ENCODE measurements at regions of chr14 and their contacts with region 1.

Region 1: GRCh38 chr14:63727774-63728728 is at the start of gene SGPP1:
- DNase-seq: peak; percentile 92
- ATAC-seq: peak; percentile 92
- H3K4me3 ChIP-seq: peak within 1 kb of the TSS; percentile 79 to 95 (median 92)
- H3K4me3 Mint-ChIP-seq: peak within 1 kb of the TSS; percentile 100
- H3K27ac ChIP-seq: peak within 1 kb of the TSS; percentile 78 to 81
- H3K27ac Mint-ChIP-seq: peak within 1 kb of the TSS; percentile 97
- H3K4me1 ChIP-seq: peaks cover 20 to 29% of the 10 kb centered on the region in 2 donors
- H3K4me1 Mint-ChIP-seq: peaks cover 35% of the 10 kb centered on the region
- H3K27me3 ChIP-seq: no peaks in the 10 kb centered on the region
- H3K27me3 Mint-ChIP-seq: no peaks in the 10 kb centered on the region
- CTCF ChIP-seq: peak; percentile 49
- total RNA-seq, gene SGPP1: 44.3 and 46.4 TPM in 2 replicates

Region 2: DNA sequence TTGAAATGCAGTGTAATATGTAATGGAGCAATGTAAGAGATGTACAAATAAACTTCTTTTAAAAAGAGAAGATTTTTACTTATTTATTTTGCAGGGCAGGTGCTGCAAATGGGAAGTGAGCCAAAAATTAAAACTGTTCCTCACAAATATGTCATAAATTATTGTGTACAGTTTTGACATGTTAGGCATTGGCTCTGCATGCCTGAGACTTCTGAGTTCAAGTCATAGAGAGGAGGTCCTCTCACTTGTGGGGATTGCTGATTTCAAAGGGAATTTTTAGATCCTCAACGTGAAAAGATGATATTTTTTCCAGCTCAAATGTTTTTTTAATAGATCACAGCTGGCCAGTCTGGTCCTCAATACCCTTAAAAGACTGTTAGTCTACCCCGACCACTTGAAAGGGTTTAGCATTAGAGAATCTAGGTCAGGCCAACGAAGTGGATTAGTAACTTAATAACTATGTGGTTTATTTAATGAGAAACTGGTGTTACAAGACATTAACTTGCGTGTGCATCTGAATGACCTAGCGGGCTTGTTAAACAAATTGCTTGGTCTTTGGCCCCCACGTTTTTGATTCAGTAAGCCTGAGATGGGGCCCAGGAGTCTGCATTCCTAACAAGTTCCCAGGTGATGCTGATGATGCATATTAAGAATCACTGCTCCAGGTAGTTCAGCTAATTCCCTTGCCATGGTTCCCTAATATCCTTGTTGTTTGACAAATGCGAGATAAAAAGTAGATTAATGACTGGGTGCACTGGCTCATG is 55.5 kb before region 1 on chr14:
- CTCF ChIA-PET with region 1: no interaction called
- POLR2A ChIA-PET with region 1: interaction called, 11 read pairs
- intact Hi-C with region 1: no loop called
- DNase-seq: no peak
- ATAC-seq: no peak
- H3K4me3 ChIP-seq: no peak overlapping the region
- H3K4me3 Mint-ChIP-seq: no peak overlapping the region
- H3K27ac ChIP-seq: no peak overlapping the region
- H3K27ac Mint-ChIP-seq: no peak overlapping the region
- H3K4me1 ChIP-seq: no peaks in the 10 kb centered on the region
- H3K4me1 Mint-ChIP-seq: no peaks in the 10 kb centered on the region
- H3K27me3 ChIP-seq: no peaks in the 10 kb centered on the region
- H3K27me3 Mint-ChIP-seq: no peaks in the 10 kb centered on the region
- CTCF ChIP-seq: no peak

Region 3: GRCh38 chr14:63717702-63718101 is 10.3 kb before region 1 on chr14:
- CTCF ChIA-PET with region 1: interaction called, 7 read pairs
- POLR2A ChIA-PET with region 1: interaction called, 3 read pairs
- intact Hi-C with region 1: loop called (anchors 1 kb)
- DNase-seq: peak; percentile 37
- ATAC-seq: no peak
- H3K4me3 ChIP-seq: no peak overlapping the region
- H3K4me3 Mint-ChIP-seq: no peak overlapping the region
- H3K27ac ChIP-seq: no peak overlapping the region
- H3K27ac Mint-ChIP-seq: no peak overlapping the region
- H3K4me1 ChIP-seq: peaks cover 0 to 5% of the 10 kb centered on the region in 2 donors
- H3K4me1 Mint-ChIP-seq: peaks cover 25% of the 10 kb centered on the region
- H3K27me3 ChIP-seq: no peaks in the 10 kb centered on the region
- H3K27me3 Mint-ChIP-seq: no peaks in the 10 kb centered on the region
- CTCF ChIP-seq: no peak

Region 4: DNA sequence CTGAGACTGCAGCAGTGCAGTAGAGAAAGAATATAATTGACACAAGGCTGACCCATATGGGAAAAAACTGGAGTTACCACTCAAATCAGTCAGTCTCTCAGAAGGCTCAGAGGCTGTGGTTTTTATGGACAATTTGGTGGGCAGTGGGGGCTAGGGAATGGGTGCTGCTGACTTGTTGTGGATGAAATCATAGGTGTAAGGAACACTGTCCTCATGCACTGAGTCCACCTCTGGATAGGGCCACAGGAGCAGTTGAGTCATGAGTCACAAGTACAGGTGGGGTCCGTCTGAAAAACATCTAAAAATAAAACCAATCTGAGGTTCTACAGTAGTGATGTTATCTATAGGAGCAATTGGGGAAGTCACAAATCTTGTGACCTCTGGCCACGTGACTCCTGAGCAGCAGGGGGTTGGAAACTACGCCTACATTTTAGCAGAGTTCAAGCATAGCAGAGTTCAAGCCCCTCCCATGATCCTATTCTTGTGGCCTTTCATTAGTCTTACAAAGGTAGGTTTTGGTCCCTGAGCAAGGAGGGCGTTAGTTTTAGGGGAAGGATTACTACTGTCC is 17.9 kb after region 1 on chr14:
- CTCF ChIA-PET with region 1: interaction called, 7 read pairs
- POLR2A ChIA-PET with region 1: interaction called, 5 read pairs
- intact Hi-C with region 1: loop called (anchors 1 kb)
- DNase-seq: peak; percentile 87
- ATAC-seq: peak; percentile 75
- H3K4me3 ChIP-seq: peak overlapping the region in 2 of 5 experiments; percentile 1 to 41
- H3K4me3 Mint-ChIP-seq: peak overlapping the region; percentile 76
- H3K27ac ChIP-seq: peak overlapping the region; percentile 94 to 97
- H3K27ac Mint-ChIP-seq: peak overlapping the region; percentile 99
- H3K4me1 ChIP-seq: peaks cover 39 to 54% of the 10 kb centered on the region in 2 donors
- H3K4me1 Mint-ChIP-seq: peaks cover 40% of the 10 kb centered on the region
- H3K27me3 ChIP-seq: no peaks in the 10 kb centered on the region
- H3K27me3 Mint-ChIP-seq: no peaks in the 10 kb centered on the region
- CTCF ChIP-seq: no peak

Region 5: DNA sequence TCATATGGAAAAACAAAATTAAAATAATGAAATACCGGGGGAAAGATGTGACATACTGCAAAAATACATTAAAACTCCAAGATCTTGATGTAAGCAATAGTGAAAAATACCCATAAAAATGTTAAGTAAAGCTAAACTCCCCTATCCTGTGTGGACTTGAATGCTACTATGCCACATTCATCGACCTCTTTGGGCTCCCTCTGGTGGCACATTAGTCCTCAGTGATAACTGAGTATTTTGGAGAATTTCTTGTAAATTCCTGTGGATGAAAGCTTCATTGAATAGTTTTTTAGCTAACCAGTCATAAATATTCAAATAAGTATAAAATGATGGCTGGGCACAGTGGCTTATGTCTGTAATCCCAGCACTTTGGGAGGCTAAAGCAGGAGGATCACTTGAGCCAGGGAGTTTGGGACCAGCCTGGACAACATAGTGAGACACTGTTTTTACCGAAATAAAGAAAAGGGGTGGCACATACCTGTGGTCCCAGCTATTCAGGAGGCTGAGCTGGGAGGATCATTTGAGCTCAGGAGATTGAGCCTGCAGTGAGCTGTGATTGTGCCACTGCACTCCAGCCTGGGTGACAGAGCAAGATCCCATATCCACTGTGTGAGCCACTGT is 42.2 kb after region 1 on chr14:
- CTCF ChIA-PET with region 1: interaction called, 92 read pairs
- POLR2A ChIA-PET with region 1: interaction called, 12 read pairs
- intact Hi-C with region 1: loop called (anchors 1 kb)
- DNase-seq: peak; percentile 76
- ATAC-seq: peak; percentile 87
- H3K4me3 ChIP-seq: no peak overlapping the region
- H3K4me3 Mint-ChIP-seq: peak overlapping the region; percentile 32
- H3K27ac ChIP-seq: no peak overlapping the region
- H3K27ac Mint-ChIP-seq: peak overlapping the region; percentile 5
- H3K4me1 ChIP-seq: peaks cover 10 to 22% of the 10 kb centered on the region in 2 donors
- H3K4me1 Mint-ChIP-seq: peaks cover 12% of the 10 kb centered on the region
- H3K27me3 ChIP-seq: no peaks in the 10 kb centered on the region
- H3K27me3 Mint-ChIP-seq: no peaks in the 10 kb centered on the region
- CTCF ChIP-seq: peak; percentile 82

Region 6: GRCh38 chr14:64387694-64388532 is 659.9 kb after region 1 on chr14 and contains the start of gene MTHFD1:
- CTCF ChIA-PET with region 1: no interaction called
- POLR2A ChIA-PET with region 1: no interaction called
- intact Hi-C with region 1: loop called (anchors 5 kb)
- DNase-seq: peak; percentile 98
- ATAC-seq: peak; percentile 75
- H3K4me3 ChIP-seq: peak within 1 kb of the TSS; percentile 68 to 93 (median 84)
- H3K4me3 Mint-ChIP-seq: peak within 1 kb of the TSS; percentile 93
- H3K27ac ChIP-seq: peak within 1 kb of the TSS; percentile 75 to 80
- H3K27ac Mint-ChIP-seq: peak within 1 kb of the TSS; percentile 95
- H3K4me1 ChIP-seq: peaks cover 27 to 34% of the 10 kb centered on the region in 2 donors
- H3K4me1 Mint-ChIP-seq: peaks cover 42% of the 10 kb centered on the region
- H3K27me3 ChIP-seq: no peaks in the 10 kb centered on the region
- H3K27me3 Mint-ChIP-seq: no peaks in the 10 kb centered on the region
- CTCF ChIP-seq: no peak
- total RNA-seq, gene MTHFD1: 47.1 and 51.3 TPM in 2 replicates

Region 7: GRCh38 chr14:65102441-65103149 is 1374.5 kb after region 1 on chr14 and contains the start of gene MAX:
- CTCF ChIA-PET with region 1: no interaction called
- POLR2A ChIA-PET with region 1: no interaction called
- intact Hi-C with region 1: loop called (anchors 5 kb)
- DNase-seq: peak; percentile 98
- ATAC-seq: peak; percentile 85
- H3K4me3 ChIP-seq: peak within 1 kb of the TSS; percentile 62 to 97 (median 93)
- H3K4me3 Mint-ChIP-seq: peak within 1 kb of the TSS; percentile 91
- H3K27ac ChIP-seq: peak within 1 kb of the TSS; percentile 95 to 97
- H3K27ac Mint-ChIP-seq: peak within 1 kb of the TSS; percentile 97
- H3K4me1 ChIP-seq: peaks cover 23 to 30% of the 10 kb centered on the region in 2 donors
- H3K4me1 Mint-ChIP-seq: peaks cover 38% of the 10 kb centered on the region
- H3K27me3 ChIP-seq: no peaks in the 10 kb centered on the region
- H3K27me3 Mint-ChIP-seq: no peaks in the 10 kb centered on the region
- CTCF ChIP-seq: no peak
- total RNA-seq, gene MAX: 127 and 130 TPM in 2 replicates